HCT116 (cell line): ENCODE measurements at regions of chr4 and their contacts with region 1.

Region 1: DNA sequence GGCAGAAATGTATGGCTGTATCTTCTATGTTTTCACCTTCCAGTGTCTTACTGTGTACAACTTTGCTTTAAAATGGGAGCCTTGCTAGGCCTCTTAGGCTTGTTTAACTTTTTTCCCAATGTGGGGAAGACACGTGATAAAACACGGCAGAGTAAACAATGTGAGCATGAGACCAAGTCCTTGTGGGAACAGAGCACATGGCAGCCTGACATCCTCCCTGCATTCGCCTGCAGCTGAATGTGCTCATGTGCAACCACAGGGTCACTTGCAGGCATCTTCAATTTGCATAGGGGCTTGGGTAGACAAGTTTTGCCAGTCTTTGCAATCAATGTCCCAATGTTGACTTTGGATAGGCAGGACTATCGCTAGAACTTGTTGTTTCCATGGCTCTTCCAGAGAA is 91.8 kb downstream of the CCNG2 start:
- DNase-seq: no peak
- ATAC-seq: no peak
- H3K4me3 ChIP-seq: no peak overlapping the region
- H3K27ac ChIP-seq: no peak overlapping the region
- H3K4me1 ChIP-seq: no peaks in the 10 kb centered on the region
- H3K27me3 ChIP-seq: peaks cover 30% of the 10 kb centered on the region; the same call in 1 of the 2 replicates
- CTCF ChIP-seq: no peak
- POLR2A ChIP-seq: no peak
- RAD21 ChIP-seq: no peak

Region 2: DNA sequence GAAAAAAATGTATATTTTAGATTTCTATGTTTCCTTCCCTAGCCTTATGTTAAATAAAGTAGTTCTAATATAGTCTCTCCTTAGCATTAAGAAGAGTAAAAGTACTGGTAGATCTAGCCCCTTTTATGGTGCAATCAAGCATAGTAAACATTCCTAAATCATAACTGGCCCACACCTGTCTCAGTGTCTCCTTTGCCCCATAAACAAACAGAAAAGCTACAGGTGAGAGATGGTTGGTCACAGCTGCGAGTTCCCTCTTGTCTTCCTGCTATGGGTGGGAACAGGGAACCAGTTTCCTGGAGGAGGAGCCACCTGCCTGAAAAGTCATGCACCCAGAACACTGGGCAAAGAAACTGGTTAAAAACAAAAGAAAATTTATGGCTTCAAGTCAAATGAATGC is 367.4 kb before region 1 on chr4:
- CTCF ChIA-PET with region 1: no interaction called
- POLR2A ChIA-PET with region 1: no interaction called
- RAD21 ChIA-PET with region 1: no interaction called
- intact Hi-C with region 1: no loop called
- DNase-seq: no peak
- ATAC-seq: peak; percentile 90
- H3K4me3 ChIP-seq: no peak overlapping the region
- H3K27ac ChIP-seq: no peak overlapping the region
- H3K4me1 ChIP-seq: peaks cover 0 to 5% of the 10 kb centered on the region in 2 experiments; a peak in 2 of 4 replicates
- H3K27me3 ChIP-seq: no peaks in the 10 kb centered on the region
- CTCF ChIP-seq: no peak
- POLR2A ChIP-seq: no peak
- RAD21 ChIP-seq: no peak

Region 3: DNA sequence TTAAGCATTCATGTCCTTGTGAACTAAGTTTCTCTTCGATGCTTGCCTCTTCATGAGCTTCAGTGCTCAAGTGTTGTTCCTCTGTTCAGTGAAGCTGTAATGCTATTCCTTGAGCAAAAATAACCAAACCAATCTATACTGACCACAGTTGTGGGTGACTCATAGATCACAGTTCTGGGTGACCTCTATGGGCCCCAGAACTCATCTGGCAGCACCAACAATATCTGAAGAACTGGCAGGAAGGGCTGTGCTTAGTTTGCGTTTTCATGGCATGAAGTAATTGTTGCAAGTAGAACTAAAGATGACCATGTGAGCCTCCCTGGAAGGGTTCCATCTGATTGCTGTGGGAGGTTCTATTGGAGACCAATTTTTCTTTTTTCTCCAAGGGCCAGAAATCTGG is 14.4 kb after region 1 on chr4:
- CTCF ChIA-PET with region 1: no interaction called
- POLR2A ChIA-PET with region 1: no interaction called
- RAD21 ChIA-PET with region 1: no interaction called
- intact Hi-C with region 1: no loop called
- DNase-seq: no peak
- ATAC-seq: no peak
- H3K4me3 ChIP-seq: no peak overlapping the region
- H3K27ac ChIP-seq: no peak overlapping the region
- H3K4me1 ChIP-seq: no peaks in the 10 kb centered on the region
- H3K27me3 ChIP-seq: peaks cover 8% of the 10 kb centered on the region; the same call in 1 of the 2 replicates
- CTCF ChIP-seq: no peak
- POLR2A ChIP-seq: no peak
- RAD21 ChIP-seq: no peak

Region 4: DNA sequence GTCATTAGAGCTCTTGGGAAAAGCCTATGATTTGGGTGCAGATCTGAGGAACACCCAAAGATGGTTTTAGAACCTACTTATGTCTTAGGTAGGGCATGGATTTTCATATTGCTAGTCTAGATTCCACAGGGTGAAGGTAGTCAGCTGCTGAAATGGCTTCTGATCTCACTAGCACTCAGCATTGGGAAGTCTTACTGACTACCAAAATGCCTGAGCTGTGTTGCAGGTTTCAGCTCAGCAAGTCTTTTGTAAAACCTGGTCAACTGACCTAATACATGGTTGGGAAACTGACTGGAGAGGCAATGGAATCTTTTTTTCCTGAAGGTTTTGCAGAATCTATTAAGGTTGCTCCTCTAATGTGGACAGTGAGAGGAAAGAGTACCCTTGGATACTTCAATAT is 44.6 kb after region 1 on chr4:
- CTCF ChIA-PET with region 1: no interaction called
- POLR2A ChIA-PET with region 1: no interaction called
- RAD21 ChIA-PET with region 1: no interaction called
- intact Hi-C with region 1: loop called (anchors 5 kb)
- DNase-seq: no peak
- ATAC-seq: no peak
- H3K4me3 ChIP-seq: no peak overlapping the region
- H3K27ac ChIP-seq: no peak overlapping the region
- H3K4me1 ChIP-seq: no peaks in the 10 kb centered on the region
- H3K27me3 ChIP-seq: no peaks in the 10 kb centered on the region
- CTCF ChIP-seq: no peak
- POLR2A ChIP-seq: no peak
- RAD21 ChIP-seq: no peak